Activated naive CD4-positive, alpha-beta T cell treated with anti-CD3 and anti-CD28 coated beads, Interleukin-2, amount 10 ng/mL, durations not matched to agents 7 days and 5 days (primary cell): ENCODE measurements at regions of chr14 and their contacts with region 1.

Region 1: DNA sequence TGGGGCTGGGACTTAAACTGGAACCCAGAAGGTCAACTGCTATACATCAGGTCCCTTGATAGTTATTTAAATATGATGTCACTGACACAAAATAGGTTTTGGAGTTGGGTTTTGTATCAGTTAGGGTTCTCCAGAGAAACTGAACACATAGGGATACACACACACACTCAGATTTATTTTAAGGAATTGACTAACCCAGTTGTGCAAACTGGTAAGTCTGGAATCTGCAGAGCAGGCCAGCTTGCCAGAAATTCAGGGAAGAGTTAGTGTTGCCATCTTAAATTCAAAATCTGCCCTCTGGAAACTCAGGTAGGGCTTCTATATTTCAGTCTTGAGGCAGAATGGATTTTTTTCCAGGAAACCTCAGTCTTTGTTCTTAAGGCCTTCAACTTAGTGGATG is 36.9 kb downstream of the MAPK1IP1L start:
- DNase-seq: no peak
- H3K4me3 Mint-ChIP-seq: no peak overlapping the region
- H3K27ac Mint-ChIP-seq: no peak overlapping the region
- H3K4me1 Mint-ChIP-seq: peaks cover 20% of the 10 kb centered on the region
- H3K27me3 Mint-ChIP-seq: peaks cover 17% of the 10 kb centered on the region

Region 2: DNA sequence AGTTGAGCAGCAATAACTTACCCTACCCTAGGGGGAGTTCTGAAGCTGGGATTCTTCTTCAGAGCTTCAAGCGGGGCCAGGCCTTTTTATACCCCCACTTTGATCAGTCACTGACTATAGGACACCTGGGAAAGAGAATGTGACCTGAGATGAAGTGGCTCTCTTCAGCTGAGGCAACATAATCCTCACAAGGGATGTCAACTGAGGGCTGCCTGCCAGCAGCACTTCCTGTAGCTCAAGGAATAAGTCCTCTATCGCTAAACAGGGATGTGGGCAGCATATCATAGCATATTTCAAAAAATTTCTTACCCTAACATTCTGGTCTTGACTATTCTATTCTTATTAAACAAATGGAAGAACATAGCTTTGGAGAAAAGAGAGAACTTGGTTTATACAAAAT is 58.1 kb after region 1 on chr14:
- CTCF ChIA-PET with region 1: interaction called, 14 read pairs
- DNase-seq: no peak
- H3K4me3 Mint-ChIP-seq: no peak overlapping the region
- H3K27ac Mint-ChIP-seq: no peak overlapping the region
- H3K4me1 Mint-ChIP-seq: peaks cover 40% of the 10 kb centered on the region
- H3K27me3 Mint-ChIP-seq: no peaks in the 10 kb centered on the region